ENCODE measurements at regions of chr10 and their contacts with region 1.

Region 1: DNA sequence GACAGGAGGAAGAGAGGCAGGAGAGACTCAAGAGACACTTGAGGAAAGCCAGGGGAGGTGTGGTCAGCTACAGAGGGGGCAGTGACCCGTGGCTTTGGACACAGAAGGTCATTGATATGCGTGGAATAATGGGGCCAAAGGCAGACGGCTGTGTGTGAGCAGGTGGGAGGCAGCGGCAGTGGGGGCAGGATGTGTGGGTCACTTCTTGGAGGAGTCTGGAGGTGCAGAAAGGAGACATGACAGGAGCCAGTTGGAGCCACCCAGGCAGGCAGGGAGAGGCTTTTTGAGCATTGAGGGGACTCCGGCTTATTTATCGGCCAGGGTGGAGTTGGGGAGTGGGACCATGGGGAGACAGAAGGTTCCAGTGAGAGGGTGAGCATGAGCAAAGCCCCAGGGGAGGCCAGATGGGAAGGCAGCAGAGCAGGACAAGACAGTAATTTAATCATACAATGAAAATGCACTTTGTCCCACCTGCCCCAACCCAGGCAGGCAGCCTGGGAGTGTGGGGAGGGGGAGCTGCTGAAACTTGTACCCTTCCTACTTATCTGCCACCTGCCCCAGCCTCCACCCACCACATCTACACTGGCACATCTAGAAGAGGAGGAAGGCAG is 5.0 kb downstream of the LDB3 start:
- DNase-seq: no peak
- ATAC-seq: no peak
- H3K4me3 ChIP-seq: no peak overlapping the region
- H3K27ac ChIP-seq: no peak overlapping the region; the same call in 1 of the 2 replicates
- H3K4me1 ChIP-seq: peaks cover 4% of the 10 kb centered on the region
- H3K27me3 ChIP-seq: no peaks in the 10 kb centered on the region
- CTCF ChIP-seq: no peak

Region 2: DNA sequence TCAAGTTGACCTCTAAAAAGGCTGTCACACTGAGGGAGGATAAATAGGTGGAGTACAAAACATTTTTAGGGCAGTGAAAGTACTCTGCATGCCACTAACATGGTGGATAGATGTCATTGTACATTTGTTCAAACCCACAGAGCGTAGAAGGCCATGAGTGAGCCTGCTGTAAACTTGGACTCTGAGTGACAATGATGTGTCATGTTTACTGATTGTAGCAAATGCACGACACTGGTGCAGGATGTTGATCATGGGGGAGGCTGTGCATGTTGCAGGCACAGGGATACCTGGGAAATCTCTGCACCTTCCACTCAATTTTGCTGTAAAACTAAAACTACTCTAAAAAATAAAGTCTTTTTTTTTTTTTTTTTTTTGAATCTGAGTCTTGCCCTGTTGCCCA is 254.2 kb before region 1 on chr10:
- CTCF ChIA-PET with region 1: no interaction called
- POLR2A ChIA-PET with region 1: interaction called, 10 read pairs
- in situ Hi-C with region 1: no loop called
- intact Hi-C with region 1: no loop called
- DNase-seq: no peak
- ATAC-seq: peak; percentile 43; the same call in 1 of the 2 replicates
- H3K4me3 ChIP-seq: no peak overlapping the region
- H3K27ac ChIP-seq: no peak overlapping the region
- H3K4me1 ChIP-seq: no peaks in the 10 kb centered on the region
- H3K27me3 ChIP-seq: no peaks in the 10 kb centered on the region
- CTCF ChIP-seq: no peak